SK-N-SH (cell line): ENCODE measurements at regions of chr2 and their contacts with region 1.

Region 1: DNA sequence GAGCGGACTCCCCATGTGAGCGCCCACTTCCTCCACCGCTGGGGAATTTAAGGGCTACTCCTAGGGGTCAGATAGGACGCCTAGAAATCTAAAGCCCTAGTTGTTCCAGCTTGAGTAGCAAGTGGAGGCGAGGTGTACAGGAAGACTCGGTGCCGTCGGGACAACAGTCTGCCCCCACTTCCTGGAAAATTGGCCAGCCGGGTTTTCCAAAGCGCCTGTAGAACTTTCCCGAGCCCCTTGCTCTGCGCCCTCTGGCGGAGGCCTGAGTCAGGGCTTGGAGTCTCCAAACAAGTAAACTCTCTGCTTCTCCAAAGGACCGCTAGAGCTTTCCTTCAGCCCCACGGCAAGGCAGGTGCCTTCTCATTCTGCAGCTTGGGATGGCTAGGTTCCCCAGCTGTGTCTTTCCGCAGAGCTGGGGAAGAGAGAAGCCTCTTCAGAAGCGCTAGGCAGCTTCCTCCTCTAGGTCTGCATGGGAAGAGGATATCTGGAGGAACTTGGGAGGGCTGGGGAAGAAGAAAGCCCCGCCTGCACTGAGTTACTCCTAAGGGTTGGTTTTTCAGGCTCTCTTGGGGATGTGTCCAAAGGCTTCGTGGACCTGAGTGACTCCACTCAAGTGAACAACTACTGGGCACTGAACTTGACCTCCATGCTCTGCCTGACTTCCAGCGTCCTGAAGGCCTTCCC is 688 bp downstream of the SPR start:
- DNase-seq: peak; percentile 86
- H3K4me3 ChIP-seq: peak overlapping the region; percentile 70 to 95
- H3K27ac ChIP-seq: peak overlapping the region; percentile 71 to 74
- H3K4me1 ChIP-seq: peaks cover 6 to 12% of the 10 kb centered on the region in 2 experiments; a peak in 2 of 4 replicates
- H3K27me3 ChIP-seq: no peaks in the 10 kb centered on the region
- CTCF ChIP-seq: peak; percentile 92
- EP300 ChIP-seq: peak in 1 of 2 experiments; percentile 31; a peak in 1 of 4 replicates
- RAD21 ChIP-seq: peak; percentile 47; the same call in 1 of the 2 replicates

Region 2: GRCh38 chr2:72871880-72872279 is 16.0 kb before region 1 on chr2:
- CTCF ChIA-PET with region 1: interaction called, 20 read pairs
- POLR2A ChIA-PET with region 1: no interaction called
- DNase-seq: no peak
- H3K4me3 ChIP-seq: no peak overlapping the region
- H3K27ac ChIP-seq: no peak overlapping the region
- H3K4me1 ChIP-seq: no peaks in the 10 kb centered on the region
- H3K27me3 ChIP-seq: no peaks in the 10 kb centered on the region; the same call in 1 of the 2 replicates
- CTCF ChIP-seq: no peak
- EP300 ChIP-seq: no peak
- RAD21 ChIP-seq: no peak

Region 3: GRCh38 chr2:72924353-72925240 is 36.7 kb after region 1 on chr2:
- CTCF ChIA-PET with region 1: interaction called, 53 read pairs
- POLR2A ChIA-PET with region 1: no interaction called
- DNase-seq: peak; percentile 60
- H3K4me3 ChIP-seq: no peak overlapping the region
- H3K27ac ChIP-seq: no peak overlapping the region
- H3K4me1 ChIP-seq: peaks cover 3 to 7% of the 10 kb centered on the region in 2 experiments; a peak in 2 of 4 replicates
- H3K27me3 ChIP-seq: peaks cover 98% of the 10 kb centered on the region
- CTCF ChIP-seq: no peak
- EP300 ChIP-seq: no peak
- RAD21 ChIP-seq: no peak

Region 4: DNA sequence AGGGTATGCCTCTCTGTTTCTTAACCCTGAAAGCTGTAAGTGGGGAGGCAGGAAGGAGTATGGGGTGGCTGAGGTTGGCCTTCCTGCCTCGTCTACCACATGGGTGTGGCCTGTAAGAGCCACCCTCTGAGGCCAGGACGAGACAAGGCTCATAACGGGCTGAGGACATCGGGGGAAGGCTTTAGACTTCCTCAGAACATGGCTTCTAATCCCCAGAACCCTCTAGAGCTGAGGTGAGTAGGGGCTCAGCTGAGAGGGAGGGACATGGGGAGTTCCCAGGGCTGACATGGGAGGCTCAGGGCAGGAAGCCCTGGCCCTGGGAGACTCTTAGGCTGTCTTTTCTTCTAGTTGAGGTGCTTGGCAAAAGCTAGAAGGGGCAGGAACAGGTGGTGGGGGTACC is 66.1 kb after region 1 on chr2:
- CTCF ChIA-PET with region 1: interaction called, 20 read pairs
- POLR2A ChIA-PET with region 1: no interaction called
- DNase-seq: no peak
- H3K4me3 ChIP-seq: no peak overlapping the region
- H3K27ac ChIP-seq: no peak overlapping the region
- H3K4me1 ChIP-seq: no peaks in the 10 kb centered on the region
- H3K27me3 ChIP-seq: no peaks in the 10 kb centered on the region
- CTCF ChIP-seq: no peak
- EP300 ChIP-seq: no peak
- RAD21 ChIP-seq: no peak

Region 5: DNA sequence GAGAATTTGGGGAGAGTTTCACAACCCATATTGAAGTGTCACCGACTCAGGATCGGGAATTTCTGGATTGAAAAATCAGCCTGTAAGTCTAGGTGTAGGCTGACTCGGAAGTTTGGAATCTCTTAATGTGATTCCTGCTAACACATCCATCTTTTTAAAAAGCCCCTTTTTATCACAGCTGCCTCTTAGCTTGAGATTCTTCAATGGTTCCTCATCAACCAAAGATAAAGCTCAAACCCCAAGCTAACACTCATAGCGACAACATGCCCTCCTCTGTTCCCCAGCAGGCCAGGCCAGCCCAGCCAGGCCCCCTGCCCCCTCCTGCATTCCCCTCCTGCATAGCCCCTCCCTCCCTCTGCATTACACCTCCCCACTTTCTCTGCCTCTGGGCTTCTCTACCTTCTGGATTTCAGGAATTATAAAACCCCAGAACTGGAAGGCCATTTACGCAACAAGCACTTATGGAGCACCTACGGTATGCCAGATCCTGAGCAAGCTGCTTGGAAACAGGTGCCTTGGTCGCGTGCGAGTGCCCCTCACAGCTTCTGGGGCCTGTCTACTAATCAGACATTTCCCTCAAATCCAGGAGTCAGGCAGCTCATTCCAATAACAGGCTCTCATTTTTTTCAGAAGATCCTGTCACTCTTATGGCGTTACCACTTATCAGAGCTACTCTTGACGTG is 92.8 kb after region 1 on chr2:
- CTCF ChIA-PET with region 1: interaction called, 115 read pairs
- POLR2A ChIA-PET with region 1: no interaction called
- DNase-seq: no peak
- H3K4me3 ChIP-seq: no peak overlapping the region
- H3K27ac ChIP-seq: no peak overlapping the region
- H3K4me1 ChIP-seq: peaks cover 0 to 24% of the 10 kb centered on the region in 2 experiments; a peak in 1 of 4 replicates
- H3K27me3 ChIP-seq: no peaks in the 10 kb centered on the region
- CTCF ChIP-seq: no peak
- EP300 ChIP-seq: no peak
- RAD21 ChIP-seq: no peak

Region 6: GRCh38 chr2:73163483-73164367 is 275.8 kb after region 1 on chr2:
- CTCF ChIA-PET with region 1: interaction called, 66 read pairs
- POLR2A ChIA-PET with region 1: no interaction called
- DNase-seq: peak; percentile 88
- H3K4me3 ChIP-seq: no peak overlapping the region; a peak in 1 of 4 replicates
- H3K27ac ChIP-seq: no peak overlapping the region
- H3K4me1 ChIP-seq: no peaks in the 10 kb centered on the region
- H3K27me3 ChIP-seq: no peaks in the 10 kb centered on the region
- CTCF ChIP-seq: peak; percentile 87
- EP300 ChIP-seq: no peak
- RAD21 ChIP-seq: peak; percentile 90